Natural killer cell (primary cell): ENCODE measurements at regions of chr22 and their contacts with region 1.

Region 1: DNA sequence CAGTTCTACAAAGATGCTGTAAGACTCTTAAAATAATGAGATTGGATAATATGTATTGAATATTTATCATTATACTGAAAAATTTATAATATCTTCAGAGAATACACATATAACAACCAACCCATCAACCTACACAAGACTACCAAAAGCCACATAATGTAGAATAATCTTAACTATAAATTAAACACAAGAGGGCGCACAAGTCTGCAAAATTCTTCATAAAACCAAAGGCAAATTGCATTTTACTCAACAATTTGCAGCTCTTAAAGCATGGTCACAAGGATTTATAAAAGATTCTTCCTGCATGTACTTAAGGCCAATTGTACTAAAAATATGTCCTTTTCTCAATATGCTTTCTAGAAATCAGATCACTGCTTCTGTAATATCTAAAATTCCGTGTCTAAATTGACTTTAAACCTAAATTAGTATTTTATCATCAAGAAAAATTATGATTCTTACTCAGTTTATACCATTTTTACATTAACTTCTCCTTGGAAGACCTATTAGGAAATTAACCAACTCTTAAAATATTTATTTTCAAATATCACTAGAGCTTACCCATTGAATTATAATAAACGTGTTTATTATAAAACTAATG is 79.0 kb downstream of the TTC28 start:
- DNase-seq: peak in 1 of 2 donors; percentile 73
- ATAC-seq: peak in 2 of 3 donors; percentile 34 to 53
- H3K4me3 ChIP-seq: no peak overlapping the region
- H3K4me3 Mint-ChIP-seq: no peak overlapping the region
- H3K27ac ChIP-seq: no peak overlapping the region
- H3K27ac Mint-ChIP-seq: no peak overlapping the region
- H3K4me1 ChIP-seq: no peaks in the 10 kb centered on the region
- H3K4me1 Mint-ChIP-seq: no peaks in the 10 kb centered on the region
- H3K27me3 ChIP-seq: peaks cover 2% of the 10 kb centered on the region
- H3K27me3 Mint-ChIP-seq: peaks cover 9 to 11% of the 10 kb centered on the region in 2 donors
- CTCF ChIP-seq: peak; percentile 78

Region 2: DNA sequence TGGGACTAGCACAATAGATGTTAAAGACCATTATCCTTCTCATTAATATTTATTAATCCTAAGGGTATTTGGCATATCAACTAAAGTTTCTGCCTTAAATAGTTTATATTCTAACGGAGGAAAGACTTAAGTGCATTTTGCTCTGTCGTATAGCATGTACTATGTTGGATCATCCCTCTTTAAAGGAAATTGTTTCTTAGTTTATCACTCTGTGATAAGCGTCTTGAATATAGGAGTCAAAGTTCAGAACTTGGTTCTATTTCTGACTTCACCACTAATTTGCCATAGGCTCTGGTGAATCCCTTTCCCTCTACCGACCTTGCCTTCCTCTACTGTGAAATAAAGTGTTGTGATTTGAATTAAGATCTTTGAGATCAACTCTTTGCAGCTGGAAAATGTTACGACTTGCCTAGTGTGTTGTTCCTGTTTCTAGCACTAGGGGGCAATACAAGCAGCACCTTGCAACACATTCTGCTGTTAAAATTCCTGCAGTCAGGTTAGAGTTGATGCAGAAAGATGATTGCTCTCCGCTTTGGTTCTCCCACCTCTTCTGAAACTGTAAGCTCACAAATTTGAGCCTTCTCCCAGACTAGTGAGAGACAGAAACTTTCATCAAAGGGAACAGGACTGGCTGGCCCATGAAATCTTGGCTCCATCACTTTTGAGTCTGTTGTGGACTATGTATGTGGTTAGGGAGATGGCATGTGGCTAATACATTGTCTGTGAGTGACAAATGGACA is 254.9 kb after region 1 on chr22:
- intact Hi-C with region 1: loop called (anchors 1 kb)
- DNase-seq: peak; percentile 19 to 82
- ATAC-seq: peak; percentile 62 to 69 (median 68)
- H3K4me3 ChIP-seq: no peak overlapping the region
- H3K4me3 Mint-ChIP-seq: no peak overlapping the region
- H3K27ac ChIP-seq: no peak overlapping the region
- H3K27ac Mint-ChIP-seq: no peak overlapping the region
- H3K4me1 ChIP-seq: no peaks in the 10 kb centered on the region
- H3K4me1 Mint-ChIP-seq: no peaks in the 10 kb centered on the region
- H3K27me3 ChIP-seq: no peaks in the 10 kb centered on the region
- H3K27me3 Mint-ChIP-seq: peaks cover 7 to 8% of the 10 kb centered on the region in 2 donors
- CTCF ChIP-seq: peak; percentile 89

Region 3: GRCh38 chr22:29154364-29155048 is 553.9 kb after region 1 on chr22:
- intact Hi-C with region 1: loop called (anchors 2 kb)
- DNase-seq: peak; percentile 66 to 78
- ATAC-seq: peak; percentile 83 to 95 (median 89)
- H3K4me3 ChIP-seq: no peak overlapping the region
- H3K4me3 Mint-ChIP-seq: no peak overlapping the region
- H3K27ac ChIP-seq: no peak overlapping the region
- H3K27ac Mint-ChIP-seq: no peak overlapping the region
- H3K4me1 ChIP-seq: peaks cover 5% of the 10 kb centered on the region
- H3K4me1 Mint-ChIP-seq: peaks cover 6 to 8% of the 10 kb centered on the region in 2 donors
- H3K27me3 ChIP-seq: no peaks in the 10 kb centered on the region
- H3K27me3 Mint-ChIP-seq: peaks cover 23 to 27% of the 10 kb centered on the region in 2 donors
- CTCF ChIP-seq: peak; percentile 89